Activated B cell treated with CpG ODN at 0.5 μM for 24 hours (primary cell): ENCODE measurements at regions of chr11 and their contacts with region 1.

Region 1: DNA sequence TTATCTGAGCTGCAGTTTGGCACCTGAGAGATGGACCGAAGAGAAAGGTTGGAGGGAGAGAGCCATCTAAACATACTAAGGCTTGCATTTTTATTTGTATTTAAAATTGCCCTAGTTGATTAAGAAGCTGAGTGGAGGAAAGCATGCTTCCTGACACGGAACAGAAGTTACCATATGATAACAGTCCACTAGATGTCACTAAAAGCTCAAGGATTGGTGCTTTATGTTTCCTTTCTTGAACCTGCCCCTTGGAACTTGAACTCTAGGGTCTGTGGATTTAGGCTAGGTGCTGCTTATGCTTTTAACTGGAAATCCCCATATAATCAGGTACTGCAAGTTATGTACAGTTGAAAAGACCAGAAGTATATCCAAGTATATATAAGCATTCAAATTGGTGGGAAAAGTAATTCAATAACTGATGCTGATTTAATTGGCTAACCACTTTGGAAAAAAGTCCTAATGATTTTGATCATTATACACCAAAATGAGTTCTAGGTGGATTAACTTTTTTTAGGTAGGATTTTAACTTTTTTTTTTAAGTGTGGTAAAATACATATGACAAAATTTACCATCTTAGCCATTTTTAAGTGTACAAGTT is 9.5 kb downstream of the RBMXL2 start:
- DNase-seq: no peak
- ATAC-seq: peak; percentile 72
- H3K4me3 Mint-ChIP-seq: no peak overlapping the region
- H3K27ac Mint-ChIP-seq: no peak overlapping the region
- H3K4me1 Mint-ChIP-seq: no peaks in the 10 kb centered on the region
- H3K27me3 Mint-ChIP-seq: peaks cover 9% of the 10 kb centered on the region
- CTCF ChIP-seq: no peak

Region 2: DNA sequence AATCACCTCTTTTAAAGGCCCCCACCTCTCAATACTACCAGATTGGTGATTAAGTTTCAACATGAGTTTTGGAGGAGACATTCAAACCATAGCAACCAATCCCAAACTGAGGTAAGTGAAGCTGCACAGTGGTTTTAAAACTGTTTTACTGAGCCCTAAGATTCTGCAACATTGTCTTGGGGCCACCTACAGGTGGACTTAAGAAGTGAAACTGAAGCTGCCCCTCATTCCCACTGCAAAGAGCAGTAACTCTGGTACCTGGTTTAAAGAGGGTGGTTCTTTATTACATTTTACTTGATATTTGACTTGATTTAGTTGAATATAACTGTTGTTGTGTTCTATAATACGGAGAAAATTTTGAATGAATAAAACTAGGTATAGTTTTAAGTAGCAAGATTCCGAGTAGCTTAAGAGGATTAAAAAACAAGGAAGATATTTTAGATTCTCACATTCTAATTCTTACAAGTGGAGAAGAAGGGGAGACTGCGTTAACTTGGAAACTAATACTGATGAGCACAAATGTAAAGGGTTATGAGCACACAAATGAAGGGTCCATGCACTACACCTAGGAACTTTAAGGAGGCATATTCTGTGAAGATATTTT is 180.1 kb after region 1 on chr11:
- CTCF ChIA-PET with region 1: interaction called, 5 read pairs
- POLR2A ChIA-PET with region 1: no interaction called
- intact Hi-C with region 1: loop called (anchors 10 kb)
- DNase-seq: no peak
- ATAC-seq: no peak
- H3K4me3 Mint-ChIP-seq: no peak overlapping the region
- H3K27ac Mint-ChIP-seq: no peak overlapping the region
- H3K4me1 Mint-ChIP-seq: no peaks in the 10 kb centered on the region
- H3K27me3 Mint-ChIP-seq: peaks cover 20% of the 10 kb centered on the region
- CTCF ChIP-seq: no peak

Region 3: GRCh38 chr11:7442588-7443215 is 344.4 kb after region 1 on chr11:
- CTCF ChIA-PET with region 1: interaction called, 15 read pairs
- POLR2A ChIA-PET with region 1: no interaction called
- intact Hi-C with region 1: loop called (anchors 1 kb)
- DNase-seq: peak; percentile 67
- ATAC-seq: peak; percentile 100
- H3K4me3 Mint-ChIP-seq: no peak overlapping the region
- H3K27ac Mint-ChIP-seq: no peak overlapping the region
- H3K4me1 Mint-ChIP-seq: no peaks in the 10 kb centered on the region
- H3K27me3 Mint-ChIP-seq: no peaks in the 10 kb centered on the region
- CTCF ChIP-seq: peak; percentile 42

Region 4: GRCh38 chr11:7696424-7696823 is 598.1 kb after region 1 on chr11:
- CTCF ChIA-PET with region 1: interaction called, 41 read pairs
- POLR2A ChIA-PET with region 1: no interaction called
- intact Hi-C with region 1: loop called (anchors 1 kb)
- DNase-seq: no peak
- ATAC-seq: no peak
- H3K4me3 Mint-ChIP-seq: no peak overlapping the region
- H3K27ac Mint-ChIP-seq: no peak overlapping the region
- H3K4me1 Mint-ChIP-seq: no peaks in the 10 kb centered on the region
- H3K27me3 Mint-ChIP-seq: peaks cover 21% of the 10 kb centered on the region
- CTCF ChIP-seq: no peak

Region 5: DNA sequence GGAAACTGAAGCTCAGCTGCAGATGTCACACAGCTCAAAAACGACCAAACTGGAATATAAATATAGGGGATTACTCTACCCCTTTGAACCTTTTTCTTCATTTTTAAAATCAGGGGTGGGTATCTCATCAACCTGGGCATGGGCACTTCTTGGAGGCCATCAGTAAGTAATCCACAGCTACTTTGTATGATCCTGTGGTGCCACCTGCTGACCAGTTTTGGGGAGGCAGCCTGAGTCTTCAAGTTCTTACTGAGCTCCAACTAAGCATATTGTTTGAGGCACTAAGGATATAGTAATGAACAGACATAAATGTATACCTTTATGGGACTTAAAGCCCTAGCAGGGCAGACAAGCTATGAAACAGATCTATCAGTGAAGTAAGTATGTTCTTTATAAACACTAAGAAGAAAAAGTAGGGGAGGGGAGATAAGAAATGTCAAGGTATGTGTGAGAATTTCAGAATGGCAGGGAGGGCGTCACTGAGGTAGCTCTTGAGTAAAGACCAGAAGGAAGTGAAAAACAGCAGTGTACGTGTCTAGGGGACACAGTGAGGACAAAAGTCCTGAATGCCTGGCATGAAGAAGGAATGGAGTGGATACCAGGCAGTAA is 1001.1 kb after region 1 on chr11:
- CTCF ChIA-PET with region 1: interaction called, 18 read pairs
- POLR2A ChIA-PET with region 1: no interaction called
- intact Hi-C with region 1: no loop called
- DNase-seq: peak; percentile 39
- ATAC-seq: peak; percentile 67
- H3K4me3 Mint-ChIP-seq: no peak overlapping the region
- H3K27ac Mint-ChIP-seq: no peak overlapping the region
- H3K4me1 Mint-ChIP-seq: no peaks in the 10 kb centered on the region
- H3K27me3 Mint-ChIP-seq: no peaks in the 10 kb centered on the region
- CTCF ChIP-seq: no peak